Ascending aorta (tissue), 2 donors: ENCODE measurements at regions of chr20 and their contacts with region 1.

Region 1: DNA sequence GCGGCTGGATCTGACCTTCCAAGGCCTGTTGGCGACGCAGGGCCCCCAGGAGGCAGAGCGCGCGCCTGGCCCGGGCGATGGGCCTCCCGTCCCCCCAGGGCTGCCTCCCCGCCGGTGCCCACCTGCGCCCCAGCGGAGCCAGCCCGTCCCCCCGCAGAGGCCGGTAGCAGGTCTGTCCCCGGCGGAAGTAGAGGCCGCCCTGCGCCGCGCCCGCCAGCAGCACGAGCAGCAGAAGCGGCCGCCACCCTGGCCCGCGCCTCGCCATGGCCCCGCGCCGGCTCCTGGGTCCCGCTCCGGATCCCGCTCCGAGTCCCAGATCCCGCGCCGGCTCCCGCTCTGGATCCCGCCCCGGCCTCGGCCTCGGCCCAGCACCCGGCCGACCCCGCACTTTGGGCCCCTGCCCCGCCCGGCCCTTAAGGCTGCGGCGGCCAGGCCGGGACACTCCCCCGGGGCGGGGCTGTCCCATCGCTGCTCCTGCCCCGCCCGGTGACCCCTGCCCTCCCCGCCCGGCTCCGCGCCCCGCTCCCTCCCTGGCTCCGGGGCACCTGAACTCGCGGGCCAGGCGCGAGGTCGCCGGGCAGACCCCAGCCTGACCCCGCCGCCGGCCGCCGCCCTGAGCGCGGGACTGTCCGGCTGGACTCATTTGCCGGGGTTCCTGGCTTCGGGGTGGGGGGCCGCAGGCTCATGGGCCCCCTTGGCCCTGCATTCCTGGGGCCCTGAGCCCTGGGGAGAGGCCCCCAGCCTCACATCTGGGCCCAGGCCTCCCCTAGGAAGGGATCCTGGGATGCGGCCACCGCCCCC is at the start of gene CTSZ:
- DNase-seq: peak in 1 of 2 donors; percentile 73
- H3K4me3 ChIP-seq: peak within 1 kb of the TSS; percentile 73 to 82
- H3K27ac ChIP-seq: peak within 1 kb of the TSS; percentile 88
- H3K4me1 ChIP-seq: peaks cover 16 to 38% of the 10 kb centered on the region in 2 donors
- H3K27me3 ChIP-seq: no peaks in the 10 kb centered on the region
- CTCF ChIP-seq: no peak
- total RNA-seq, gene CTSZ: 342 TPM

Region 2: GRCh38 chr20:58907399-58908137 is 99.5 kb before region 1 on chr20:
- intact Hi-C with region 1: loop called (anchors 1 kb)
- DNase-seq: peak; percentile 90 to 98
- H3K4me3 ChIP-seq: peak overlapping the region; percentile 31 to 51
- H3K27ac ChIP-seq: peak overlapping the region; percentile 83 to 92
- H3K4me1 ChIP-seq: peaks cover 15 to 25% of the 10 kb centered on the region in 2 donors
- H3K27me3 ChIP-seq: no peaks in the 10 kb centered on the region
- CTCF ChIP-seq: no peak

Region 3: GRCh38 chr20:59042796-59043660 is 36.0 kb after region 1 on chr20:
- intact Hi-C with region 1: loop called (anchors 5 kb)
- DNase-seq: peak; percentile 71 to 96
- H3K4me3 ChIP-seq: peak overlapping the region; percentile 80 to 87
- H3K27ac ChIP-seq: peak overlapping the region; percentile 69 to 86
- H3K4me1 ChIP-seq: peaks cover 3 to 15% of the 10 kb centered on the region in 2 donors
- H3K27me3 ChIP-seq: no peaks in the 10 kb centered on the region
- CTCF ChIP-seq: no peak